ENCODE measurements at regions of chr11 and their contacts with region 1.

Region 1: DNA sequence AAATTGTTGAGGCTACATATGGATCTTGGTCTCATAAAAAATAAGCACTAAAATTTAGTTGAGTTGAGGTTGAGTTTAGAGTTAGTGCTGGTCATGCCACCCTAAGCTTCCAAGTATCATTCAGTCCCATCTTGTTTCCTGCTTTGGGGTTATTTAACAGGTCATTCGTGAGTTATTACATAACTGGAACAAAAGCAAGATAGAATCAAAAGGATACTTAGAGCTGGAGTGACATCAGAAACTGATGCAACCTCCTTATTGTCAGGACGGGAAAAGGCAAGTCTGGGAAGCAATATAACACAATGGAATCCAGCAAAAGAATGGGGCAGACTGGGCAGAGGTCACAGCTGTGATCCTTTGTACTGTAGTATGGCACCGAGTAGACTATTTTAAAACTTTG is 4.5 kb upstream of the PRSS23 start:
- DNase-seq: no peak
- ATAC-seq: no peak
- H3K4me3 ChIP-seq: no peak overlapping the region
- H3K27ac ChIP-seq: no peak overlapping the region
- H3K4me1 ChIP-seq: peaks cover 0 to 16% (median 4%) of the 10 kb centered on the region in 12 donors
- H3K27me3 ChIP-seq: peaks cover 0 to 12% (median 0%) of the 10 kb centered on the region in 9 donors
- CTCF ChIP-seq: no peak
- POLR2A ChIP-seq: no peak

Region 2: GRCh38 chr11:86740709-86741483 is 55.0 kb before region 1 on chr11:
- intact Hi-C with region 1: loop called in 1 of 10 experiments (anchors 2 kb)
- DNase-seq: peak in 4 of 5 donors; percentile 43 to 66 (median 46)
- ATAC-seq: peak; percentile 60 to 78 (median 73)
- H3K4me3 ChIP-seq: no peak overlapping the region
- H3K27ac ChIP-seq: peak overlapping the region; percentile 62 to 88 (median 77)
- H3K4me1 ChIP-seq: peaks cover 4 to 65% (median 30%) of the 10 kb centered on the region in 12 donors
- H3K27me3 ChIP-seq: no peaks in the 10 kb centered on the region
- CTCF ChIP-seq: no peak
- POLR2A ChIP-seq: no peak

Region 3: DNA sequence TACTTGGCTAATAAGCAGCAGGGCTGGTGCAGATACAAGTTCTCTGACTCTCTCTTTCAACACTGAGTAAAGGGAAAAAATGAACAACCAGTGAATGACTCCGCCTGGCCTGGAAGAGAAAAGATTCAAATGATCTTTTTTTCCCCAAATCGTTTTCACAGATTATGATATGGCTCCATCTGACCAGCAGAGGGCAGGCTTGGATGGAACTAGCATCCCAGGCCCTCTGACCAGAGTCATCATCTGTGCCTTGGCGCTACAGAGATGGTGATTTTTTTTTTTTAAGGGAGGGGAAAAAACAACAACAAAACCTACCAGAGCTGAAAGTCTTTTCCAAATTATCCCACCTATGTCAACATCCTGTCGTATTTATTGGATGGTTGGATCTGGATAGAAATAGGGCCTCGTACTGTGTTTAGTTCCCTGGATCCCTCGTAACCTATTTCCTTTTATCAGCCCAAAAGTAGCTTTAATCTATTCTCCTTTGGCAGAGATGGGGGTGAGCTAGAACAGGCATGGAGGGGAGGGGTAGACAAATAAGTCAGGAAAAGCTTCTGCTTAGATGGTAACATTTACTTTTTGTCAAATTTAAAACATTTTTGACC is 74.2 kb after region 1 on chr11:
- intact Hi-C with region 1: no loop called
- DNase-seq: peak in 4 of 5 donors; percentile 44 to 69 (median 66)
- ATAC-seq: peak; percentile 73 to 88 (median 84)
- H3K4me3 ChIP-seq: no peak overlapping the region
- H3K27ac ChIP-seq: peak overlapping the region in 1 of 12 donors; percentile 18
- H3K4me1 ChIP-seq: peaks cover 0 to 17% (median 0%) of the 10 kb centered on the region in 12 donors
- H3K27me3 ChIP-seq: no peaks in the 10 kb centered on the region
- CTCF ChIP-seq: peak; percentile 73 to 91 (median 82)
- POLR2A ChIP-seq: no peak